PC-3 (cell line): ENCODE measurements at regions of chr10 and their contacts with region 1.

Region 1: DNA sequence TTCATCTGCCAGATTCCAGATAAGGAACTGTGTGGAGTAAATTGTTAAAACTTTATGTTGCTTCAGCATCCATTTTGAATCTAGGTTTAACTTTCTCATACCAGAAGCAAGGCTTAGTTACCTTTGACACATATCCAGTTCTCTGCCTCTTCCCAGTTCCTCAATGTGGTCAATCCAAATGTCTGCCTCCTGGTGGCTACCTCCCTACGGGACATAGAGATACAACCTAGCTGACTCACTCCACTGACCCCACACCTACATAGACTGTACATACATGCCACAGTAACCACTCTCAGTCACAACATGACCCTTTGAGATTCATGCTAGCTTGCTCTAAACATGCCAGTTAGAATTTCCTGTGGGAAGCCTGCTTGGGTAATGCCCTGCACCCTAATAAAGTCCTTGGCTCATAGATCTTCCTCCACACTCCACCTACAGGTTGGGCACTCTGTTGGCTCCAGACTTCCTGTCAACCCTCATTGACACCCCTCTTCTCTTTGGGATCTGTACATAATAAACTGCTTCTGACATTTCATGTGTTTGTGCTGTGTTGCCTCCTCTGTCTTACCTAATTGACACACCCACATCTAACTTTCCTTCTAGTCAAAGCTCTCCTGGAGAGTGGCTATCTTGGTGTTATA is 278.1 kb downstream of the HTR7 start:
- DNase-seq: peak; percentile 80
- ATAC-seq: peak; percentile 73
- H3K4me3 ChIP-seq: no peak overlapping the region
- H3K27ac ChIP-seq: peak overlapping the region; percentile 46
- H3K4me1 ChIP-seq: peaks cover 12% of the 10 kb centered on the region
- H3K27me3 ChIP-seq: no peaks in the 10 kb centered on the region
- CTCF ChIP-seq: peak; percentile 55

Region 2: DNA sequence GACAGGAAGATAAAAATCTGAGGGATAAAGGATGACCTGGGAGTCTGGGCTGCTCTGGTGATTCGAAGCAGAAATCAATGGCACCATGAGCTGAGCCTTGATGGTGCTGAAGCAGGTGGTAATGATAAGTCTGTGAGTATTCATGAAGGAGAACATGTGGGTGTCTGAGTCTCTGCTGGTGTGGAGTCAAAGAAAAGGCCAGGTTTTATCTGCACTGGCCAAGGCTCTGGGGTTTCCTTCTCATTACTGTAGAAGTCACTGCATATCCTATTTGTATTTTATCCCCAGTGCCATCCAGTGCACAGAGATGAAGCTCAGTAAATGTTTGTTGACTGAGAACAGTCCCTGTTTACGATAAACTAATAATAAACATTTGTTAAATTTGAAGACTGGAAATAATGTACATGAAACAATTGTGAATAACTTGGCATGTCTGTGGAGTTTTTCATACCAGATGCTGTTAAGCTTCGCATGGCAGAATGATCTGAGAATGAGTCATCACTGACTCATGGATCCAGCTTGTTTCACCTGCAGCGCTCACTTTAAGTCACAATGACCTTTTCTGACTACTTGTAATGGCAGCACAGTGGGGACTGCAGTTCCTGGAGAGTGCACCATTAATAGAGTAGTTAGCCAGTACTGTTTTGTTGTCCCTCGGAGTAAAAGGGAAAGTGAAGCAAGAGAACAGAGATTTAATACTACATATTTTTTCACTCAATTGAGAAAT is 260.4 kb before region 1 on chr10:
- CTCF ChIA-PET with region 1: no interaction called
- POLR2A ChIA-PET with region 1: no interaction called
- intact Hi-C with region 1: loop called (anchors 10 kb)
- DNase-seq: peak; percentile 96
- ATAC-seq: peak; percentile 97
- H3K4me3 ChIP-seq: no peak overlapping the region
- H3K27ac ChIP-seq: peak overlapping the region; percentile 89
- H3K4me1 ChIP-seq: peaks cover 30% of the 10 kb centered on the region
- H3K27me3 ChIP-seq: no peaks in the 10 kb centered on the region
- CTCF ChIP-seq: no peak